CD14-positive monocyte (primary cell): ENCODE measurements at regions of chr13 and their contacts with region 1.

Region 1: DNA sequence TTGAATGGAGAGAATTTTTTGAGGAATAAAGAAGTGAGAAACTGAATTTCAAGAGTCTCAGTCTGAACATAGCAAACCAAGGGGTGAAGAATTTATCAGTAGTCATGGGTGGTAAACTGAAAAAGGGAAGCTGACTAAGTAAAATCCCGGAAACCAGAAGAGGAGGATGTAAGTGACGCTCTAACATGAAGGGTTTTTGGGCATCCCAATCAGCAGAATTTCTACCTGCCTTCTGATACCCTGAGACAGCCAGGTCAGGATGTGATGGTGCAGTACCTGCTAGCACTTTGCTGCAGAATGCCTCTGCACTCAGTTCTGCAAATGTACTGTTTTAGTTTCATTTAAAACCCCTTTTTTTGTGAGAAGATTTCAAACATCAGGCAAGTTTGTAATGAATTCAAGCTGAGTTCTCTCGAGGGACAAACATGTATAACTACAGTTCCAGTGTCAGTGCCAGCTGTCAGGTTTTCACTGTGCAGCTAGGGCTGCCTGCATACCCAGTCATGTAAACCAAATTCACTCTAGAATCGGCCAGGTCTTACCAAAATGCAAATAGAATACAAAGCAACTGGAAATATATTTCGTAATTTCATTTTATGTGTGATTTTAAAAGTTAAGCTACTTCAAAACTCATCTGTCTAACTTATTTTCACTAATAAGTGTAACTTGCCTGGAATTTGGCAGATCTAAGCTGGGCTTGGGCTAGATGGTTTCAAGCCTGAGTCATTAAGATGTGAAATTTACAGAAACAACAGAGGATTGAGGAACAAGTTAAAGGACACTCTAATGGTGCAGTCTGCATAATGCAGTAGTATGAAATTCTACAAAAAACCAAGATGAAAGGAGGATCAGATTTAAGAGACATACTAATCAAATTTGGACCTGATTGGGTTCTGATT is 13.8 kb downstream of the METTL21C start:
- DNase-seq: peak; percentile 21 to 62 (median 47)
- H3K4me3 ChIP-seq: no peak overlapping the region
- H3K4me3 Mint-ChIP-seq: peak overlapping the region in 1 of 2 donors; percentile 36
- H3K27ac ChIP-seq: peak overlapping the region in 1 of 2 donors; percentile 60
- H3K27ac Mint-ChIP-seq: peak overlapping the region; percentile 74 to 95 (median 85)
- H3K4me1 ChIP-seq: peaks cover 13% of the 10 kb centered on the region in 2 donors
- H3K4me1 Mint-ChIP-seq: peaks cover 17% of the 10 kb centered on the region
- H3K27me3 ChIP-seq: no peaks in the 10 kb centered on the region
- H3K27me3 Mint-ChIP-seq: peaks cover 2 to 3% (median 3%) of the 10 kb centered on the region in 3 donors
- CTCF ChIP-seq: no peak

Region 2: DNA sequence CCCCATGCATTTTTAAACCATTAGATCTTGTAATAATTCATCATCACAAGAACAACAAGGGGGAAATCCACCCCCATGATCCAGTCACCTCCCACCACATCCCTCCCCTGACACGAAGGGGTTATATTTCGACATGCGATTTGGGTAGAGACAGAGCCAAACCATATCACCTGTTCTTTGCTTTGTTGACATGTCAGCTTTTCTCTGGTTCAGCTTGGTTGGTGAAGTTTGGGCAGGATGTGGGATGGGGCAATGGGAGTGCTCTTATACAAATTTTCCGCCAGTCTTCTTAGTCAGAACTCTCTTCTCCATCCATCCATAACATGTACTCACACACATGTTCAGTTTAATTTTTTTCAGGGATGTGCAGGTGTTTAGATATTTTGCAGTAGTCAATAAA is 71.4 kb before region 1 on chr13:
- intact Hi-C with region 1: loop called in 1 of 2 experiments (anchors 2 kb)
- DNase-seq: no peak
- H3K4me3 ChIP-seq: no peak overlapping the region
- H3K4me3 Mint-ChIP-seq: no peak overlapping the region
- H3K27ac ChIP-seq: peak overlapping the region in 1 of 2 donors; percentile 27
- H3K27ac Mint-ChIP-seq: peak overlapping the region in 2 of 7 donors; percentile 31 to 55
- H3K4me1 ChIP-seq: peaks cover 19 to 28% of the 10 kb centered on the region in 2 donors
- H3K4me1 Mint-ChIP-seq: peaks cover 32% of the 10 kb centered on the region
- H3K27me3 ChIP-seq: no peaks in the 10 kb centered on the region
- H3K27me3 Mint-ChIP-seq: peaks cover 0 to 2% (median 0%) of the 10 kb centered on the region in 3 donors
- CTCF ChIP-seq: no peak

Region 3: DNA sequence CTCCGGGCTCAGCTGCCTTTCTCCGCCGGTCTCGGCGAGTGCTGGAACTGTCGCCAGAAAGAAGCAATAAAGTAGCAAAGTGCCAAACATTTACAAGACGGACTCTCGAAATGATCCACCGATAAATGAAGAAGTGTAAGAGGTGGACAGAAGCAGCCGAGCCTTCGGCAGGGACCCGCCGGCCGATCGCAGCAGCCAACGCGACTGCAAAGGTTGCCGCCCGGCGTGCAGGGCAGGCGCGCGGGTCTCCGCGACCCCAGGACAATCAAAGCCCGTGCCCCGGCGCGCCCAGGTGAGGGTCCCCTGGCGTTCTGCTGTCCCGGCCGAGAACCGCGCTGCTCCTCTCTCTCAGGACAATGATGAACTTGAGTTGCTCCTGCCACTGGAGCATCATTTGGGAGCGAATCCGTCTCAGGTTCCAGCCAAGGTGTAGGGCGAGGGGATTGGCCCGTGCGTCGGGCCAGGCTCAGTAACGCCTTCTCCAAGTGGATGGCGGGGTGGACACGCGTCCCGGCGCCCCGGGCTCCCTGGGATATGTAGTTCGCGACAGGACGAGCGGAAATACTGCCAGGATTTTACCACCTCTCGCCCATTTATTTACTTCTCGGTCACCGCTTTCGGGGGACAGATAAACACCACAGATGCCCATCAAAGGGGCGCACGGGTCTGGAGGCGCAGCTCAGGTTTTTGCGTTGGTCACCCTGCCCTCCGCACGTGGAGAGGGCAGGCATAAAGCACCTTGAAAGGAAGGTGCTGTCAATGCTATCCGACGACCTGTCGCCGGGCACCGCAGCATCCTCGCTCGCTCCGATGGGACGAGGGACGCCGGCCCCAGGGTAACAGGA is 117.7 kb after region 1 on chr13 and contains the starts of genes BIVM and POGLUT2:
- intact Hi-C with region 1: loop called in 1 of 2 experiments (anchors 10 kb)
- DNase-seq: peak; percentile 19 to 39 (median 32)
- H3K4me3 ChIP-seq: peak within 1 kb of the TSS; percentile 40 to 81 (median 54)
- H3K4me3 Mint-ChIP-seq: peak within 1 kb of the TSS; percentile 83 to 93
- H3K27ac ChIP-seq: no peak within 1 kb of the TSS
- H3K27ac Mint-ChIP-seq: peak within 1 kb of the TSS in 1 of 7 donors; percentile 13
- H3K4me1 ChIP-seq: peaks cover 20 to 29% of the 10 kb centered on the region in 2 donors
- H3K4me1 Mint-ChIP-seq: peaks cover 23% of the 10 kb centered on the region
- H3K27me3 ChIP-seq: peaks cover 16 to 31% of the 10 kb centered on the region in 2 donors
- H3K27me3 Mint-ChIP-seq: peaks cover 25 to 34% (median 34%) of the 10 kb centered on the region in 3 donors
- CTCF ChIP-seq: no peak
- polyA plus RNA-seq, gene BIVM: 0.76 to 1.1 (median 0.81) TPM
- polyA plus RNA-seq, gene POGLUT2: 0.22 TPM in 1 of 3 donors, not detected in the others

Region 4: DNA sequence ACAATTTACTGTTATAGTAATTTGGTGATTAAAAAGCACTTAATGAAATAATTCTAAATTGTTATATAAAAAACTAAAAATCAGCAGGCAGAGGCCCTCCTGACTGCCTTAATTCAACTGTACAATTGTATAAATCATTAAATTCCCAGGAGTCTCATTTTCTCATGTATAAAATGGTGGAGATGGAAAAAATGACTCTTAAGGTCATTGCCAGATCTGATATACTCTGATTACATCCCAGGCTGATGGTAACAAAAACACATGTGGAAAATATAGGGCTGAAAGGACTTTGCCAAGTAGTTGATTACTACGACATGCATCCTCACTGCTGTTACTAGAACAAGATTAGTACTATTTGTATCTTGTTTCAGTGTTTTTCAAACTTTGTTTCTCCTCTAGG is 1405.1 kb after region 1 on chr13:
- intact Hi-C with region 1: no loop called
- DNase-seq: no peak
- H3K4me3 ChIP-seq: no peak overlapping the region
- H3K4me3 Mint-ChIP-seq: no peak overlapping the region
- H3K27ac ChIP-seq: no peak overlapping the region
- H3K27ac Mint-ChIP-seq: no peak overlapping the region
- H3K4me1 ChIP-seq: no peaks in the 10 kb centered on the region
- H3K4me1 Mint-ChIP-seq: no peaks in the 10 kb centered on the region
- H3K27me3 ChIP-seq: no peaks in the 10 kb centered on the region
- H3K27me3 Mint-ChIP-seq: no peaks in the 10 kb centered on the region
- CTCF ChIP-seq: no peak